Naive thymus-derived CD4-positive, alpha-beta T cell (primary cell): ENCODE measurements at regions of chr4 and their contacts with region 1.

Region 1: DNA sequence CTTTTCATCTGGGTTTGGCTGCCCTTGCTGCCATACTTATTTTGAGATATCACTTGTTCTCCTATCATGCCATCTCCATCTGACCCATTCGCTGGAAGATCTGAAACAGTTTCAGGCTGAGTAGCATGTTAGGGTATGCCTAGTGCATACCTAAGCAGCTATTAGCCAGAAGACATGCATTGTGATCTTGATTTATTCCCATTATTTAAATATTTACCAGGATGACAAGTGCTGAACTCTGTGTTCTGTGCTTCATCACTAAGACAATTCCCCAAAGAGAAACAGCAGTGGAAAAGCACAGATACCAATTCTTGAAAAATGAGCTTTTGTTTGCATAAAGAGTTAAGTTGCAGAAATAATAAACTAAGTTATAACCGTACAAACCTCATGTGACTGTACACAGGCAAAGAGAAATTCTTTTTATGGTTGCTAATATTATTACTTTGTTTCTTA is 271.0 kb upstream of the ARSJ start:
- DNase-seq: no peak
- ATAC-seq: no peak
- H3K4me3 ChIP-seq: no peak overlapping the region
- H3K4me3 Mint-ChIP-seq: no peak overlapping the region
- H3K27ac ChIP-seq: no peak overlapping the region
- H3K27ac Mint-ChIP-seq: no peak overlapping the region
- H3K4me1 ChIP-seq: no peaks in the 10 kb centered on the region
- H3K4me1 Mint-ChIP-seq: no peaks in the 10 kb centered on the region
- H3K27me3 ChIP-seq: no peaks in the 10 kb centered on the region
- H3K27me3 Mint-ChIP-seq: peaks cover 0 to 24% (median 15%) of the 10 kb centered on the region in 5 donors

Region 2: DNA sequence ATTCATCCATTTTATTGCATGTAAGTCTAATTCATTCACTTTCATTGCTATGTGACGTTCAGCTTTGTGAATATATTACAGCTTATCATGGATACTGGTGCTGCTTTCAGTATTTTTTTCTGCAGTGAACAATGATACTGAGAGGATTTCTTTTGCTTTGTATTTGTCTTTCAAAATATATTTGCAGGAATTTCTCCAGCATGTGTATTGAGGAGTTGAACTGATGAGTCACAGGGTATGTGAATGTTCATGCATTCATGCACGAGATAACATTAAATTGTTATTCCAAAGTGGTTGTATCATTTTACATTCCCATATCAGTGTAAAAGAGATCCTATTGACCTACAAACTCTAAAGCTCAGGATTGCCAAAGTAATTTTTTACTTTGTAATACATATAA is 12.8 kb after region 1 on chr4:
- CTCF ChIA-PET with region 1: no interaction called
- POLR2A ChIA-PET with region 1: no interaction called
- intact Hi-C with region 1: loop called in 1 of 2 experiments (anchors 1 kb)
- DNase-seq: no peak
- ATAC-seq: no peak
- H3K4me3 ChIP-seq: no peak overlapping the region
- H3K4me3 Mint-ChIP-seq: no peak overlapping the region
- H3K27ac ChIP-seq: no peak overlapping the region
- H3K27ac Mint-ChIP-seq: no peak overlapping the region
- H3K4me1 ChIP-seq: no peaks in the 10 kb centered on the region
- H3K4me1 Mint-ChIP-seq: no peaks in the 10 kb centered on the region
- H3K27me3 ChIP-seq: no peaks in the 10 kb centered on the region
- H3K27me3 Mint-ChIP-seq: peaks cover 0 to 5% (median 0%) of the 10 kb centered on the region in 5 donors